ENCODE measurements at regions of chr16 and their contacts with region 1.

Region 1: GRCh38 chr16:11452746-11453389 is 107.6 kb downstream of the RMI2 start:
- DNase-seq: no peak
- ATAC-seq: no peak
- H3K4me3 Mint-ChIP-seq: no peak overlapping the region
- H3K27ac Mint-ChIP-seq: no peak overlapping the region
- H3K4me1 Mint-ChIP-seq: no peaks in the 10 kb centered on the region
- H3K27me3 Mint-ChIP-seq: peaks cover 1% of the 10 kb centered on the region
- CTCF ChIP-seq: no peak

Region 2: GRCh38 chr16:11396241-11397048 is 56.4 kb before region 1 on chr16:
- CTCF ChIA-PET with region 1: no interaction called
- POLR2A ChIA-PET with region 1: no interaction called
- intact Hi-C with region 1: loop called (anchors 10 kb)
- DNase-seq: peak; percentile 63
- ATAC-seq: peak; percentile 81
- H3K4me3 Mint-ChIP-seq: no peak overlapping the region
- H3K27ac Mint-ChIP-seq: no peak overlapping the region
- H3K4me1 Mint-ChIP-seq: peaks cover 4% of the 10 kb centered on the region
- H3K27me3 Mint-ChIP-seq: no peaks in the 10 kb centered on the region
- CTCF ChIP-seq: peak; percentile 90

Region 3: DNA sequence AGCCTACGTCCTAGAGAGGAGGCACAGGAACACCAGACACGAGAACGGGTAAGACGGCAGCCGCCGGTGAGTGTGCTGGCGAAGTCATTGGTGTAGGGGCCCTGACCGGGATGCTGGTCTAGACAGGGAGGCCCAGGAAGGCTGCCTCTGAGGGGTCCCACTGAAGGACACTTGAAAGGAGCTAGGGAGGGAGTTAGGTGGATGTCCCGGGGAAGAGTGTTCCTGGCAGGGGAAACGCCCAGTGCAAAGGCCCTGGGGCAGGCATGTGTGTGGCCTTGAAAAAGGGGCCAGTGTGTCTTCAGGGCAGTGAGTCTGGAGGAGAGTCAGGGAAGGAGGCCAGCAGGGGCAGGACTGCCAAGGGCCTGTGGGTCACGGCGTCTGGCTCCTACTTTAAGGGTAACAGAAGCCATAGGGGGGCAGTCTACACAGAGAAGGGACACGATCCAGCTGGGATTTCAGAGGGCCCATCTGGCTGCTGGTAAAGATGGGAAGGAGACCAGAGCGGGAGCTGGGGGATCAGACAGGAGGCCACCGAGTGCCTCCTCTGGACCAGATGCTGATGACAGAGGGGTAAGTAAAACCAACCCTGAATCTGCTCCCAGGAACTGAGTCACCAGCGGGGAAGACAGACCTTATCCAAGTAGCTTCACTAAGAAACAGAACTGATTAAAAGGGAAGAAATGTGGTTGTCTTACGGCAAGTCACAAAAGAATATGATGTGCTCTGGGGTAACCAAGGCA is 18.0 kb after region 1 on chr16:
- CTCF ChIA-PET with region 1: no interaction called
- POLR2A ChIA-PET with region 1: no interaction called
- intact Hi-C with region 1: no loop called
- DNase-seq: no peak
- ATAC-seq: no peak
- H3K4me3 Mint-ChIP-seq: no peak overlapping the region
- H3K27ac Mint-ChIP-seq: no peak overlapping the region
- H3K4me1 Mint-ChIP-seq: no peaks in the 10 kb centered on the region
- H3K27me3 Mint-ChIP-seq: no peaks in the 10 kb centered on the region
- CTCF ChIP-seq: no peak